Motor neuron (in vitro differentiated cells): ENCODE measurements at regions of chr7 and their contacts with region 1.

Region 1: DNA sequence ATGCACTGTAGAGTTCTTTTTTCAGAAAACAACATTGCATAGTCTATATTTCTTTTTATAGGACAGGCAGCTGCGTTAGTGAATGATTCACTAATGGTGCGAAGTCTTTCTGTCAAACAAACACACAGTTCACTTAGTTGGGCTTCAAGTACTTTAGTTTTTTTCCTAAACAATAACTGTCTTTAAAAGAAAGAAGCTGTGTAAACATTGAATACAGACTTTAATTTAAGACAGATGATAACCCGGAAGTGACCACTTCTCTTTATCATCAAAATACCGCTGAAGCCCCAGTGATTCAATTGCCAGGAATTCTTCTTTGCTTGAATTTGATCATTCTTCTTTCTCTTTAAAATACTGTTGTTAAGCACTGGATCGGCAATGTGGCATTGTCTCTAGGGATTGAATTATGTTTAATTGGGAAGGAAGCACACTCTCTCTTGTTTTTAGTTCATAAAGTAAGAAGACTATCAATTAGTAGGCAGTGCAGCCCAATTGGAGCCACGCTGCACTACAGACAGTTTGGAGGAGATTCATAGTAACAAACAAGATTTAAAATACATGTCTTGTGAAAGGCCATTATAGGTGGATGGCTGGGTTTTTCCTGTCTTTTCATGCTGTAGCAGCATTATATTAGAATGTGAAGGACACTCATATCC is 30.4 kb downstream of the CNTNAP2 start:
- ATAC-seq: peak in 5 of 8 experiments; percentile 38 to 66 (median 56)
- H3K4me3 ChIP-seq: no peak overlapping the region
- H3K27ac ChIP-seq: no peak overlapping the region
- H3K4me1 ChIP-seq: peaks cover 5 to 9% of the 10 kb centered on the region in 2 donors

Region 2: GRCh38 chr7:145543242-145543641 is 603.7 kb before region 1 on chr7:
- in situ Hi-C with region 1: no loop called
- ATAC-seq: no peak
- H3K4me3 ChIP-seq: no peak overlapping the region
- H3K27ac ChIP-seq: no peak overlapping the region
- H3K4me1 ChIP-seq: no peaks in the 10 kb centered on the region

Region 3: DNA sequence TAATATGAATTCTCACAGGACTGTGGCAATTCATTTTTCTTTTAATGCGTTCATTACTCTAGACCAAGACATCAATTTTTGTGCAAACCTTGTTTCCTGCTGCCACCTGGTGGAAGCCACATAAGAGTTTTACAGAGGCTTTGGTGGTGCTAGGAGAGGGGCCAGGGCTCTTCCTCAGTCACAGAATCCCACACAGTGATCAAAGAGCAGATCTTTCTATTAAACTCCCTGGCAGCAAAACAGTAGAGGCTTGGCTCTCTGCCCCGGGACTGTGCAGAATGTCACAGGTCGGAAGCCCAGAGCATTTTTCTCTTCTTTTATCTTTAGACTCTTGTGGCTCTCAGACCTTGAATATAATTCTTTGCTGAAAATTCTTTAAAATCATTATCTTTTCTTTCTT is 1937.2 kb after region 1 on chr7:
- in situ Hi-C with region 1: loop called in 1 of 9 experiments (anchors 25 kb)
- ATAC-seq: peak; percentile 47 to 98 (median 86)
- H3K4me3 ChIP-seq: no peak overlapping the region
- H3K27ac ChIP-seq: no peak overlapping the region
- H3K4me1 ChIP-seq: peaks cover 2 to 5% of the 10 kb centered on the region in 2 donors